Activated T-helper 1 cell treated with anti-CD3 and anti-CD28 coated beads, Interleukin-12 subunit alpha, Interleukin-12 subunit beta, Interleukin-2, Interleukin-4 antibody, amounts not matched to agents 30 ng/mL and 10 ng/mL and 1 ng/mL, durations not matched to agents 14 hours and 24 hours and 36 hours (primary cell): ENCODE measurements at regions of chr3 and their contacts with region 1.

Region 1: DNA sequence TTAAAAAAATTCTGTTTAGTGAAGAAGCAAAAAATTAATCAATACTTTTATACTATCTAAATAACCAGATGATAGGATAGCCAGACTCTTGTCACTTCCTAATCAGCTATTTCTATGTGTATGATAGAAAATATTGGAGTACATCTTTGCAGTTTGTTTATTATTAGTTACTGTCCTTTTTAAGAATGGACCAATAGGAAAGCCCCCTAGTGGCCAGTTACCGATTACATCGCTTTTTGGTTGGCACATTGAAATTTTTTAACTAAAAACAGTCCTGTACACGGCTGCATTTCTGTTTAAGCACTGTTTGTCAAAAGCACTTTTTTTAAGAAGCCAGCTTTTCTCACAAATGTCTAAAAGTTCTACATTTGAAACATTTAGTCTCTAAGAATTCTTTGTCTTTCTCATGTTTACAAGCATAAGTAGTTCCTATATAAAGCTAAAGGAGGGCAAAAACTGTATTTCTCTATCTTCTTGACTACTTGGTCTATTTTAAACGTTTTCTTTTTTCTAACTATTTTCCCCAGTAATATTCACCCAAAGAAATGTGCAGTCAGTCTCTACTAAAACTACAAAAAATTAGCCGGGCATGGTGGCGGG is 253.2 kb upstream of the LRTM1 start:
- DNase-seq: no peak
- H3K4me3 Mint-ChIP-seq: no peak overlapping the region
- H3K27ac Mint-ChIP-seq: no peak overlapping the region
- H3K4me1 Mint-ChIP-seq: no peaks in the 10 kb centered on the region
- H3K27me3 Mint-ChIP-seq: peaks cover 2% of the 10 kb centered on the region

Region 2: DNA sequence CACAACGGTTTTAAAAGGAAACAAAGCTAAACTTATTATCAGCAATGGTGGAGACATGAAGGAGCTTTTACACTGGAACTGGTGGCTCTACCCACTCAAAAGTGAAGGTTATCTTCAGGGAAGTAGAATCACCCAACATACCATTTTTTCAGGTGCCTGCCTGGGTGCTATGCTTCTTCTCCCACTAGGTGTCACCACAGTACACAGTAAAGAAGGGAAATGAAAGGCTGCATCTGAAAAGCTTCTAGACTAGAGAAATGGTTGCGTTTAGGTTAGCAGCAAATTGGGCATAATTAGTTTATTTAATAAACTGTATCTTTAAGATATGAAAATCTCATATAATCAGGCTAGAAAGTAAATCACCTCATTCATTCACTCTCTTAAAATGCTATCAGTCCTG is 1242.4 kb before region 1 on chr3:
- intact Hi-C with region 1: loop called (anchors 5 kb)
- DNase-seq: peak; percentile 12
- H3K4me3 Mint-ChIP-seq: no peak overlapping the region
- H3K27ac Mint-ChIP-seq: no peak overlapping the region
- H3K4me1 Mint-ChIP-seq: no peaks in the 10 kb centered on the region
- H3K27me3 Mint-ChIP-seq: no peaks in the 10 kb centered on the region

Region 3: GRCh38 chr3:54853573-54854404 is 327.2 kb before region 1 on chr3:
- intact Hi-C with region 1: loop called (anchors 2 kb)
- DNase-seq: peak; percentile 2
- H3K4me3 Mint-ChIP-seq: no peak overlapping the region
- H3K27ac Mint-ChIP-seq: no peak overlapping the region
- H3K4me1 Mint-ChIP-seq: no peaks in the 10 kb centered on the region
- H3K27me3 Mint-ChIP-seq: no peaks in the 10 kb centered on the region

Region 4: GRCh38 chr3:55128231-55128791 is 52.7 kb before region 1 on chr3:
- intact Hi-C with region 1: no loop called
- DNase-seq: no peak
- H3K4me3 Mint-ChIP-seq: no peak overlapping the region
- H3K27ac Mint-ChIP-seq: no peak overlapping the region
- H3K4me1 Mint-ChIP-seq: no peaks in the 10 kb centered on the region
- H3K27me3 Mint-ChIP-seq: no peaks in the 10 kb centered on the region

Region 5: DNA sequence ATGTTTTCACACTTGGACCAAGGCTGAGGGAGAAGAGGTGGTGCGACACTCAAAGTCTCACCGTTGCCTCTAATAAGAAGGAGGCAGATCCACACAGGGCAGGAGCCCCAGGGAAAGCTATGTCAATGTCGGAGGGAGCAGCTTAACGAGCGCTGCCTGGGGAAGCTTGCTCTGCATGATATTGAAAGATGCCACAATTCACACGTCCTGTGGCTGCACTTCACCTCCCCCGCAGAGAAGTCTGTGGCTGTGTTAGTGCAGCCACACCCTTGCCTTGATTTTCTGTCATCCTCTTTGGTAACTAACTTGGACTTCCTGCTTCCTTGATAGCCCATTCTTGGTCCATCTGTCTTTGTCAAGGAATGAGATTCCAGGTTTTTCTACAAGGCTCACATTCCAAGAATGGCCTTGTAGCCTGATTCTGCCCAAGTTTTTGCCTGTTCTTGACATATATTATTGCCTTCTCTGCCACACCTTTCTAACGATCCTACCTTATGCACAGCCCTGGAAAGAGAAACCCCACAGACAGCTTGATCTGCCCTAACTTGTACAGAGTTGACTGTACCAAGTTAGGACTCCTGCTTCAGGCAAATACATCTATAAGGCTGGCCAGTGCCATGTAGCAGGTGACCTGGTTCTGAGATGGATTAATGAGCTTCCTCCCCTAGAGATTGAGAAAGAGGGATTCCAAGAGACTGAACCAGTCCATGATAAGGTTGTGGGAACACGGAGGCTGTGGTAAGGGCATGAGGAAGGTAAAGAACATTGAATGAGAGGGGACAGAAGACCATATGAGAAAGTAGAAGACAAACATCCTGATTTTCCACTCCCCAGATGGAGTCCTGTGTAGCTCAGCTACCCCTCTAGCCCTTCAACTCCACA is 459.1 kb after region 1 on chr3:
- intact Hi-C with region 1: no loop called
- DNase-seq: no peak
- H3K4me3 Mint-ChIP-seq: no peak overlapping the region
- H3K27ac Mint-ChIP-seq: no peak overlapping the region
- H3K4me1 Mint-ChIP-seq: no peaks in the 10 kb centered on the region
- H3K27me3 Mint-ChIP-seq: no peaks in the 10 kb centered on the region